Activated CD4-positive, alpha-beta memory T cell treated with anti-CD3 and anti-CD28 coated beads for 36 hours (primary cell): ENCODE measurements at regions of chr7 and their contacts with region 1.

Region 1: DNA sequence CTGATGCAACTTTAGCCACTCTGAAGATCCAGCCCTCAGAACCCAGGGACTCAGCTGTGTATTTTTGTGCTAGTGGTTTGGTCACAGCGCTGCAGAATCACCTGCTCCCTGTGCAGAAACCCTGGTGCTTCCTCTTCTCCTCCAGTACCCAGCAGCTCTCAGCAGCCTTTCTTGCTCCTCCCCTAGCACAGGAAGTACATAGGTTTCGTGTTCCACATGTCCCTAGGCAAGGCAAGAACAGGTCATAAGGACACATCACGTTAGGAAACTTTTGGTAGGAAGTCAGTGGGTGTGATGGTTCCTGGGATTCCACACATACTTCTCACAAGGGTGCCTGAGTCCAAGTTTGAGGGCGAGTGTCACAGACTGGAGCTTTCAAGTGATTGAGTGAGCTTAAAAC is 167.9 kb upstream of the PRSS1 start:
- DNase-seq: peak; percentile 41
- H3K4me3 Mint-ChIP-seq: peak overlapping the region; percentile 35
- H3K27ac Mint-ChIP-seq: peak overlapping the region; percentile 57
- H3K4me1 Mint-ChIP-seq: peaks cover 30% of the 10 kb centered on the region
- H3K27me3 Mint-ChIP-seq: no peaks in the 10 kb centered on the region

Region 2: GRCh38 chr7:142557971-142558582 is 23.3 kb before region 1 on chr7:
- CTCF ChIA-PET with region 1: interaction called, 22 read pairs
- POLR2A ChIA-PET with region 1: no interaction called
- intact Hi-C with region 1: no loop called
- DNase-seq: peak; percentile 65
- H3K4me3 Mint-ChIP-seq: peak overlapping the region; percentile 28
- H3K27ac Mint-ChIP-seq: peak overlapping the region; percentile 35
- H3K4me1 Mint-ChIP-seq: peaks cover 5% of the 10 kb centered on the region
- H3K27me3 Mint-ChIP-seq: peaks cover 3% of the 10 kb centered on the region